Endothelial cell of umbilical vein (primary cell): ENCODE measurements at regions of chr2 and their contacts with region 1.

Region 1: DNA sequence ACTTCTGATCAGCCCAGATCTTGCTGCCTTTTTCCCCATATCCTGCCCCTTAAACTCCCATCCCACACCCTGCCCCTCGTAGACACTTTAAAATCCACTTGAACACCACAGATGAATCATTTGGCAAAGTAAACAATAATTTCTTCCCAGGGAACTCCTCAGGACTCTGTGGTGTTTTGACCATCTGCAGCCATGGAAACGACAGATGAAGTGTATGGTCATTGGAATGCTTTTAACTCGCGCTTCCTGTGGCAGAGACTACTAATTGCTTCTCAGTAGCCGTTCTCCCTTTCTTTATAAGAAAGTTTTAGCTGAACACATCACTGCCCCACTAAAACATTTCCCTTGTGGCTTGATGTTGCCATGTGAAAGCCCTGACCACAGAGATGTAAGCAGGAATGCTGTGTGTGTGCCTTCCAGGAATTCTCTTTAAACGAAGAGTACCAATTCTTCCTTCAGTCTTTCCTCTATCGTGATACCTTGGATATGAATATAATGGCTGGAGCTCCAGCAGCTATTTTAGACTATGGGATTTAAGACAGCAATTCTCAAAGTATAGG is 92.7 kb upstream of the PARD3B start:
- DNase-seq: peak; percentile 99
- H3K4me3 ChIP-seq: no peak overlapping the region
- H3K27ac ChIP-seq: peak overlapping the region; percentile 92
- H3K4me1 ChIP-seq: peaks cover 24% of the 10 kb centered on the region
- H3K27me3 ChIP-seq: no peaks in the 10 kb centered on the region
- CTCF ChIP-seq: no peak
- POLR2A ChIP-seq: no peak

Region 2: GRCh38 chr2:204114295-204115145 is 338.0 kb before region 1 on chr2:
- CTCF ChIA-PET with region 1: no interaction called
- POLR2A ChIA-PET with region 1: no interaction called
- dilution Hi-C with region 1: no loop called
- intact Hi-C with region 1: loop called (anchors 1 kb)
- DNase-seq: peak; percentile 99
- H3K4me3 ChIP-seq: peak overlapping the region in 1 of 3 experiments; percentile 11
- H3K27ac ChIP-seq: peak overlapping the region; percentile 86
- H3K4me1 ChIP-seq: peaks cover 77% of the 10 kb centered on the region
- H3K27me3 ChIP-seq: no peaks in the 10 kb centered on the region
- CTCF ChIP-seq: no peak
- POLR2A ChIP-seq: peak; percentile 73

Region 3: GRCh38 chr2:204187229-204188083 is 265.1 kb before region 1 on chr2:
- CTCF ChIA-PET with region 1: no interaction called
- POLR2A ChIA-PET with region 1: no interaction called
- dilution Hi-C with region 1: no loop called
- intact Hi-C with region 1: no loop called
- DNase-seq: no peak
- H3K4me3 ChIP-seq: no peak overlapping the region
- H3K27ac ChIP-seq: no peak overlapping the region
- H3K4me1 ChIP-seq: no peaks in the 10 kb centered on the region
- H3K27me3 ChIP-seq: peaks cover 3 to 5% of the 10 kb centered on the region in 2 experiments
- CTCF ChIP-seq: no peak
- POLR2A ChIP-seq: no peak

Region 4: DNA sequence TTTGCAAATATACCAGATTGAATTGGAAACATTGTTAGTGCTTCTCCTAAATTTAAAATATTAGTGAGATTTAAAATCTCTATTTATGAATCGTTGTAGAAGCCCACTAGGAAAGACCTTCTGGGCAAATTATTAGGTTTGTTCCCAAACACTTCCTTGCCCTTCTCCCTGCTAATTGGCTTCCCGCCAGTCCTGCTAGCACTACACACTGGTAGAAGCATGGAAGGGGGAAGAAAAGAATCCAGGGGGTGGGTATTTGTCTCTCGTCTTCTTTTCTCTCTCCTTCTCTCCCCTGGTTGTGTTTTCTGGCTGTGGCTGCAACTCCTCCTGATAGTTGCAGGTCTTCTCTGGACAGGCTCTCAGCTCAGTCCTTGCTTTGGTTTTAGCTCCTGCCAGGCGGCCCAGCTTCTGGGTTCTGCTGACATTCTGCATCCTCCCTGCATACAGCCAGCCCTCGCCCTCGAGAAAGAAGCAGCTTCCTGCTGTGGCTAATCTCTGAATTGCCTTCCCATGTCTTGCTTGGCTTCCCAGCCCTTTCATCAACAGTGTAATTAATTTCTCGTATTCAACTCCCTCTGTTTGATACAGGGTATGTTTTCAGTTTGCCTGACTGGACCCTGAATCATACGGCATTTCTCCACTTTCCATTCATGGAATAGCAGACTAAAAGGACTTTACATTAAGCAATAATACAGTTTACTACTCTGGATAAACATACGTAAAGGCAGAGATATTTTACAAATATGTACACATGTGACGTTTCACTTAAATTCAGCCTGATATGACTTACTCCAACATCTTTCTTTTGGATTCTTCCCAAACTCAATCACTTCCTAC is 85.9 kb after region 1 on chr2:
- CTCF ChIA-PET with region 1: no interaction called
- POLR2A ChIA-PET with region 1: no interaction called
- dilution Hi-C with region 1: no loop called
- intact Hi-C with region 1: loop called (anchors 1 kb)
- DNase-seq: peak; percentile 93
- H3K4me3 ChIP-seq: peak overlapping the region in 2 of 3 experiments; percentile 6 to 51
- H3K27ac ChIP-seq: peak overlapping the region; percentile 81
- H3K4me1 ChIP-seq: peaks cover 32% of the 10 kb centered on the region
- H3K27me3 ChIP-seq: no peaks in the 10 kb centered on the region
- CTCF ChIP-seq: no peak
- POLR2A ChIP-seq: no peak

Region 5: DNA sequence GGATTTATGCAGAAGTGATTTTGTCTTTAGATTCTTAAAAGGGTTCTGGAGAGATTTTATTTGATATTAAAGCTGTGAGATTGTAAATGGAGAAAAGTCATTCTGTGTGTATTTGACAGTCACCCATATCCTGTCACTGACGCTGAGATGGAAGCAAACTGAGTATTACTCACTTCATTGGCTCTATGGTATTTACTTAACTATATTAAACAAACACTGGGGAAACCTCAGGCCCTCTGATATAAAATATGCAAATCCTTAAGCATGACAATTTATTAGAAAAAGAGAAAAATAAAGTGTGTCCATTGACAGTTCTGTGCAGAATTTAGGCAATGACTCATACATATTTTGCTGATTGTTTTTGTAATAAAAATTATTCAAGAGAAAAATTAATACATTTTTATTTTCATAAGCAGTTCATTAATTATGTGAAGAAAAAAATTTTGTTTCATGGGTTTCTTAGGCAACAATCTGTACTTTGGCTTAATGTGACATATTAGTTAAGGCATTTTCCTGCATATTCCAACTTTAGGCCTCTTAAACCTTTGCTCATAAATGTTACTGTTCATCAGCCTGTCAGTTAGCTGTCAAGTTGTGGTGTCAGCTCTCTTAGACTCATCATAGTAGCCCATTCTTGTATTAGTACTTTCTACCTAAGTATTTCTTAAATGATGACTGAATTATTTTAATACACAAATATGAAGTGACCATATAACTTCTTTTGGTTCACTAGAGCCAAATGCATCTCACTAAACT is 192.7 kb after region 1 on chr2:
- CTCF ChIA-PET with region 1: no interaction called
- POLR2A ChIA-PET with region 1: no interaction called
- dilution Hi-C with region 1: no loop called
- intact Hi-C with region 1: no loop called
- DNase-seq: peak; percentile 56
- H3K4me3 ChIP-seq: no peak overlapping the region
- H3K27ac ChIP-seq: peak overlapping the region; percentile 53
- H3K4me1 ChIP-seq: peaks cover 12% of the 10 kb centered on the region
- H3K27me3 ChIP-seq: no peaks in the 10 kb centered on the region
- CTCF ChIP-seq: no peak
- POLR2A ChIP-seq: no peak

Region 6: GRCh38 chr2:204665244-204665643 is 212.7 kb after region 1 on chr2:
- CTCF ChIA-PET with region 1: no interaction called
- POLR2A ChIA-PET with region 1: no interaction called
- dilution Hi-C with region 1: no loop called
- intact Hi-C with region 1: loop called (anchors 1 kb)
- DNase-seq: no peak
- H3K4me3 ChIP-seq: no peak overlapping the region
- H3K27ac ChIP-seq: peak overlapping the region; percentile 92
- H3K4me1 ChIP-seq: peaks cover 45% of the 10 kb centered on the region
- H3K27me3 ChIP-seq: no peaks in the 10 kb centered on the region
- CTCF ChIP-seq: no peak
- POLR2A ChIP-seq: no peak

Region 7: DNA sequence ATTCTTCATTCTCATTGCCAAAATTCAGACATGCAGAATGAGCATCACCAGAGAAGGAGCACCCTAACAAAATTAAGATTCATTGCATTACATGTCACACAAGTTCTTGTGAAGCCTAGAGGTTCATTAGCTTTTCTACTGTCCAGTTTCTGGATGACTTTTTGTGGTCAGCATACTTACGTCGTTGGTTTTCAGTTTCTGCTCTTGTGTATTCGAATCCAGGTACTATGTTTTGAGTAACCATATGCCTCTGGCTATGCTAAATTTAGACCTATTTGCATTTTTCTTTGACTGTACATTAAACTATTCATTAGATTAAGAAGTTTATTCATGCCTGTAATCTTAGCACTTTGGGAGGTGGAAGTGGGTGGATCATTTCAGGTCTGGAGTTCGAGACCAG is 344.0 kb after region 1 on chr2:
- CTCF ChIA-PET with region 1: no interaction called
- POLR2A ChIA-PET with region 1: no interaction called
- dilution Hi-C with region 1: no loop called
- intact Hi-C with region 1: loop called (anchors 1 kb)
- DNase-seq: no peak
- H3K4me3 ChIP-seq: no peak overlapping the region
- H3K27ac ChIP-seq: no peak overlapping the region
- H3K4me1 ChIP-seq: peaks cover 22% of the 10 kb centered on the region
- H3K27me3 ChIP-seq: no peaks in the 10 kb centered on the region
- CTCF ChIP-seq: no peak
- POLR2A ChIP-seq: no peak

Region 8: GRCh38 chr2:205133544-205133943 is 681.0 kb after region 1 on chr2:
- CTCF ChIA-PET with region 1: no interaction called
- POLR2A ChIA-PET with region 1: no interaction called
- dilution Hi-C with region 1: no loop called
- intact Hi-C with region 1: loop called (anchors 5 kb)
- DNase-seq: no peak
- H3K4me3 ChIP-seq: no peak overlapping the region
- H3K27ac ChIP-seq: no peak overlapping the region
- H3K4me1 ChIP-seq: peaks cover 4% of the 10 kb centered on the region
- H3K27me3 ChIP-seq: no peaks in the 10 kb centered on the region
- CTCF ChIP-seq: no peak
- POLR2A ChIP-seq: no peak

Region 9: DNA sequence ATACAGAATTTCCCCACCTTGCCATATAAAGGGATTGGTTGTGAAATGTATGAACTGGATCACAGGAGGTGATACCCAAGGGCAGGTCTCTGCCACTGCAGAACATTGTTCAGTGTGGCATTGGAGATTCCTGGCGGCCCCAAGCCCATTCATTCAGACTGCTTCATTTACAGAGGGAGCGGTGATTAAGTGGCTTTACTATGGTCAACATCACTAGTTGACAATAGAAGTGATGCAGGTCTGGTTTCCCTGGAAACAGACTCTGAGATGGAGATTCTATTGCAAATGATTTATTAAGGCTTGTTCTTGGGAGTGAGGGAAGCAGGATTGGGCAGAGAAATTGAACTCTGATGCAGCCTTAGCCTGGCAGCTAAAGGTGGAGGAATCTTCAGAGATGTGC is 1884.3 kb after region 1 on chr2:
- CTCF ChIA-PET with region 1: no interaction called
- POLR2A ChIA-PET with region 1: no interaction called
- dilution Hi-C with region 1: no loop called
- intact Hi-C with region 1: no loop called
- DNase-seq: no peak
- H3K4me3 ChIP-seq: no peak overlapping the region
- H3K27ac ChIP-seq: no peak overlapping the region
- H3K4me1 ChIP-seq: no peaks in the 10 kb centered on the region
- H3K27me3 ChIP-seq: peaks cover 3 to 7% of the 10 kb centered on the region in 2 experiments
- CTCF ChIP-seq: no peak
- POLR2A ChIP-seq: no peak